Activated CD8-positive, alpha-beta memory T cell treated with anti-CD3 and anti-CD28 coated beads, Interleukin-2, amount 10 ng/mL, durations not matched to agents 7 days and 5 days (primary cell): ENCODE measurements at regions of chr17 and their contacts with region 1.

Region 1: DNA sequence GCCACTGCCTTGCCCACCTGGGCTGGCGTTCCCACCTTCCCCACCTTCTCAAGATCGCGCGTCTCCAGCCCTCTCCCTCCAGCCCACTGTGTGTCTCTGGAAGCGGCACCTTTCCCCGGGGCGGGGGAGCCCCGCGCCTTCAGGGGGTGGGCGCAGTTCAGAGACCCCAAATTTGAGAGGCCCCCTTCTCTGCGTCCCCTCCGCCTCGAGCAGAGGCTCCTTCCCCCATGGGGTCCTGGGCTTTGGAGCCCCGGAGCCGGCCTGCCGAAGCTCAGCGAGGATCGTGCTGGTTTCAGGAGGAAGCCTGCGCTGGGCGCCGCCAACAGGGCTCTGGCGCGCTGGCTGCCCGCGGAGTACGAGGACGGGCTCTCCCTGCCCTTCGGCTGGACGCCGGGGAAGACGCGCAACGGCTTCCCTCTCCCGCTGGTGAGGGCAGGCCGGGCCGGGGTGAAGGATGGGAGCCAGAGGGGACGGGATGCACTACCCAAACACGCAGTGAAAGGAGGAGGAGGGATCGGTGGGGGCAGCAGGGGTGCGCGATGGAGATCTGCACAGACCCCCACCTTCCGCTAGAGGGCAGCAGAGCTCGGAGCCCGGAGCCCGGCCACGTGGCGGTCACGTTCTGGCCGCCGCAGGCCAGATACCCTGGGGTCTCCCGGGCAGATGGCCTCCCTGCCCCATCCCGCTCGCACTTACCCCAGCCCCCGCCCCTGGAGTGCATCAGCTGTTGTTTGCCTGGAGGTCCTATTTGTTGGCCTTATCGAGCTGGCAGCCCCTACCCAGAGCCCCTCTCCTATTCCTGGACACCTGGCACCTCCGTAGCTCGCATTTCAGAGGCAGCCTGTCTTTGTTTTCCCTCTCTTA is 11.1 kb downstream of the LPO start:
- DNase-seq: peak; percentile 77
- ATAC-seq: peak; percentile 89
- H3K4me3 Mint-ChIP-seq: peak overlapping the region; percentile 66
- H3K27ac Mint-ChIP-seq: no peak overlapping the region
- H3K4me1 Mint-ChIP-seq: peaks cover 22% of the 10 kb centered on the region
- H3K27me3 Mint-ChIP-seq: peaks cover 58% of the 10 kb centered on the region

Region 2: GRCh38 chr17:58200017-58200633 is 49.4 kb before region 1 on chr17:
- CTCF ChIA-PET with region 1: interaction called, 10 read pairs
- DNase-seq: peak; percentile 62
- ATAC-seq: peak; percentile 83
- H3K4me3 Mint-ChIP-seq: no peak overlapping the region
- H3K27ac Mint-ChIP-seq: no peak overlapping the region
- H3K4me1 Mint-ChIP-seq: no peaks in the 10 kb centered on the region
- H3K27me3 Mint-ChIP-seq: peaks cover 25% of the 10 kb centered on the region

Region 3: DNA sequence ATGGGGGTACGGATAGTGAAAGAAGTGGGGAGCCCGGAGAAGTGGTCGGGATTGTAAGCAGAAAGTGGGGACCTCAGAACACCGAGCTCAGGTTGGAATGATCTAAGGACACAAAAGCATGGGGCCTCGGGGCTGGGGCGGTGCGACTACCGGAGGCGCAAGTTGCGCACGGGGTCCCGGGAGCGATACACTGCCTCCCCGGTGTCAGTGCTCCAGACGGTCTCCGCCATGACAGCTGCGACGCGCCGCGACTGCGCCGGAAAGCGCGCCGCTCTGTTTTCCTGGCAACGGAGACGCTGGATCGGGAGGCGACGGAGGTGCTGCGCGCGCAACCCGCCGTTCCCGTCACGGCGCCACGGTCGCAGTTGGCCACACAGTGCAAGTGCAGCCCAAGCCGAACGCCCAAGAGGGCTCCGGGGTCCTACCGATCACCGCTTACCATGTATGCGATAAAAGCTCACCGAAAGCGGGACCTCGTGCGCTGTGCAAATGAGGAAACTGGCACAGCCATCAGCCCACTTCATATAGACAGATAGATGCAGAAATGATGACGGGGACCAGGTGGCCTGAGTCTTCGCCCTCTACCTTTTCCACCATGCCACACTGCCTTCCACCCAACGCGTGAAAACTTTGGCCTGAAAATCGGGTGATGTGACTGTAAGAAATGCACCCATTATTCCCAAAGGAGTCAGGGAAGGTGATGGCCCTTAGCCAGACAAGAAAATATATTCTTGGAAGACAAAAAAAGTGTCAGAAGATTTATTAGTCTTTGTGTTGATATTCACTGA is 30.3 kb before region 1 on chr17 and contains the start of gene MKS1:
- CTCF ChIA-PET with region 1: interaction called, 17 read pairs
- DNase-seq: peak; percentile 97
- ATAC-seq: peak; percentile 99
- H3K4me3 Mint-ChIP-seq: peak within 1 kb of the TSS; percentile 89
- H3K27ac Mint-ChIP-seq: peak within 1 kb of the TSS; percentile 83
- H3K4me1 Mint-ChIP-seq: peaks cover 24% of the 10 kb centered on the region
- H3K27me3 Mint-ChIP-seq: peaks cover 5% of the 10 kb centered on the region
- total RNA-seq, gene MKS1: 17.8 to 18.2 TPM

Region 4: DNA sequence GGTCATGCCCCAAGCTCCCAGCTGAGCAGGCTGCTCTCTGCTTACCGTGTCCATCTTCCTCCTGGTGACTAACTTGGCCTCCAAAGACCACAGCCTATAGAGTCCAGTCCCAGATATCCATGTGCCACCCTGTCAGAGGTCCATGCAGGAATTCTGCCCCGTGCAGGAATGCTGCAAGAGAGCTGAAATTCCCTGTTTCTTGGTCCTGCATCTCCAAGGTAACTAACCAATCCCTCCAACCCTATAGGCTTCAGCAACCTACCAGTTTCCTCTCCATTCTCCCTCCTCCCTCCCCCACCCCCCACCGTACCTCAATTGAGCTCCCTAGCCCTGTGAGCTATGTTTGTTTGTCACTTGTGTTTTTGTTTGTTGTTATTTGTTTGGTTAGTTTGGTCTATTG is 20.8 kb before region 1 on chr17:
- CTCF ChIA-PET with region 1: interaction called, 22 read pairs
- DNase-seq: no peak
- ATAC-seq: no peak
- H3K4me3 Mint-ChIP-seq: no peak overlapping the region
- H3K27ac Mint-ChIP-seq: no peak overlapping the region
- H3K4me1 Mint-ChIP-seq: peaks cover 15% of the 10 kb centered on the region
- H3K27me3 Mint-ChIP-seq: peaks cover 47% of the 10 kb centered on the region

Region 5: DNA sequence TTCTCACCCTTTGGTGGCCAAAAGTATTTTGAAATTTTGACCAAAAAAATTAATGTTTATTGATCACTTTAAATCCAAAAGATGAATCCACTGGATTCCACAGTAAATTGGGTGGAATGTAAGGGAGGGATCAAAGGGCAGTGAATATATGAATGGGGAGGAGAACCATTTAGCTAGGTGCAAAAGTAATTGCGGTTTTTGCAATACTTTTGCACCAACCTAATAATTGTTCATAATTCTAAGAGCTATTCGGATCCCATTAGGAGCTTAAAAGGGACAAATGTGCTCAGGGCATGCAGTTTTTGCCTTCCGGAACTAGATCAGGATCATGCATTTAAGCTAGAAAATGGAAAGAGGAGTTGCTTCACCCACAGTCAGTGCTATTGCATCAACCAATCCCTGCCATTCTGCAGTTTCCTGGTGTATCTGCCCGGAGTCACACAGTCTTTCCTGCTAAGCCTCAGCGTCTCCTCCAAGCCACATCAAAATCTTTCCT is 11.3 kb before region 1 on chr17 and contains the start of gene LPO:
- CTCF ChIA-PET with region 1: interaction called, 17 read pairs
- DNase-seq: no peak
- ATAC-seq: no peak
- H3K4me3 Mint-ChIP-seq: no peak within 1 kb of the TSS
- H3K27ac Mint-ChIP-seq: no peak within 1 kb of the TSS
- H3K4me1 Mint-ChIP-seq: peaks cover 3% of the 10 kb centered on the region
- H3K27me3 Mint-ChIP-seq: peaks cover 84% of the 10 kb centered on the region
- total RNA-seq, gene LPO: not detected

Region 6: DNA sequence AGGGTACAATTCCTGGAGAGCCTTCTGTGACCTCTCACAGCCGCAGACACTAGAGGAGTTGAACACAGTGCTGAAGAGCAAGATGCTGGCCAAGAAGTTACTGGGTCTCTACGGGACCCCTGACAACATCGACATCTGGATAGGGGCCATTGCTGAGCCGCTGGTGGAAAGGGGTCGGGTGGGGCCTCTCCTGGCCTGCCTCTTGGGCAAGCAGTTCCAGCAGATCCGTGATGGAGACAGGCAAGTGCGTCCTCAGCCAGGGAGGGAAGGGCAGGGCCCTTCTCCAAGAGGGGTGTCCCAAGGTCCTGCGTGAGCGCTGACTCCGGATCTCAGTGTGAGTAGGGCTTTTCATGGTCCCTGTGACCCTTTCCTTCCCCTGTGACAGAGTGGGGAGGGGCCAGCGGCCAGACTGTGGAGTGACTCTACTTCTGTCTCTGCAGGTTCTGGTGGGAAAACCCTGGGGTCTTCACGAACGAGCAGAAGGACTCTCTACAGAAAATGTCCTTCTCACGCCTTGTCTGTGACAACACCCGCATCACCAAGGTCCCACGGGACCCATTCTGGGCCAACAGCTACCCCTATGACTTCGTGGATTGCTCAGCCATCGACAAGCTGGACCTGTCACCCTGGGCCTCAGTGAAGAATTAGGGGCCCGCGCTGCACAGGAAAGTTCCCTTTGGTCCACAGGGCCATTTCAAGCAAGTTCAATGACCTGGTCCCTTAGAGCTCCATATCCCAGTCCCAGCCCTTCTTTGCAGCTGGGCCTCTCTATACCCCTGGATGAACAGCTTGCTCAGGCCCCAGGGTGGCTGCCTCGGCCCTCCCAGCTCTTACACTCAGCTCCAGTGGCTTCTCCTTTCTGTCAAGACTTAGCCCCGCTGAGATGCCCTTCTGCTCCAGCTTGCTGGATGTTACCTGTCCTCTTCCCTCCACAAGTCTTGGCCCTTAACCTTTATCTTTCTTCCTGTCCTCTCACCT is 18.1 kb after region 1 on chr17:
- CTCF ChIA-PET with region 1: interaction called, 14 read pairs
- DNase-seq: peak; percentile 31
- ATAC-seq: no peak
- H3K4me3 Mint-ChIP-seq: no peak overlapping the region
- H3K27ac Mint-ChIP-seq: no peak overlapping the region
- H3K4me1 Mint-ChIP-seq: no peaks in the 10 kb centered on the region
- H3K27me3 Mint-ChIP-seq: peaks cover 37% of the 10 kb centered on the region

Region 7: GRCh38 chr17:58344047-58344790 is 94.7 kb after region 1 on chr17:
- CTCF ChIA-PET with region 1: interaction called, 11 read pairs
- DNase-seq: peak; percentile 97
- ATAC-seq: peak; percentile 75
- H3K4me3 Mint-ChIP-seq: peak overlapping the region; percentile 83
- H3K27ac Mint-ChIP-seq: peak overlapping the region; percentile 98
- H3K4me1 Mint-ChIP-seq: peaks cover 87% of the 10 kb centered on the region
- H3K27me3 Mint-ChIP-seq: no peaks in the 10 kb centered on the region

Region 8: DNA sequence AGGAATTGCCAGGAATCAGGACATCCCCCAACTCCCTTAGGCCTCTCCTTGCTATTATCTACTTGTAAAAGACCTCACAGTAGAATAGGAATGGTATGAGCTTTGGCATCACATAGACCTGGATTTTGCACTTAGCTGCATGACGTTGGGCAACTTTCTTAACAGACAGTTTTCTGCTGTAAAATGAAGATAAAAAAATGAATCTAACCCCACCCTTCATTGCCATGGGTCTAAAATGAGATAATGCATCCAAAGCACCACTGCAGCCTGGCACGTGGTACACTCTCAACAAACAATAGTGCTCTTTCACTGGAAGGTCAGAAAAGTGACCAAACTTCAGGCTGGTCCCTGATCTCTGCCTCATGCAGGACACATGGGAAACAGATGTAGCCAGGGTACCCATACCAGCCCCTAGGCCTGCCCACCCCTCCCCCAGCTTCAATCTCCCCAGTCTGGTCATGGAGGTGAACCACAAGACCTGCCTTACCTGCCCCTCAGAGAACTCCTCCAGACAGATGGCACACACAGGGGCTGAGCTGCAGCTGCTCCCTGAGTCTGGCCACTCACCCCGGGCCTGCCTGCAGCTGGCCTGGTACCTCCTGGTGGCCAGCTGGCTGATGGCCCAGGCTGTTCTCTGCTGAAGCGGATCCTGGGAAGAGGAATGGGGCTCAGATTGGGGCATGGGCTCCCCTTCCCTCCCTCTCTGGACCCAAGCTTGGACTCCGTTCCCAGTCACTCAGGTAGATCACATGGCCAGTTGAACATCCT is 111.0 kb after region 1 on chr17:
- CTCF ChIA-PET with region 1: no interaction called
- DNase-seq: no peak
- ATAC-seq: no peak
- H3K4me3 Mint-ChIP-seq: no peak overlapping the region
- H3K27ac Mint-ChIP-seq: no peak overlapping the region
- H3K4me1 Mint-ChIP-seq: no peaks in the 10 kb centered on the region
- H3K27me3 Mint-ChIP-seq: no peaks in the 10 kb centered on the region

Region 9: GRCh38 chr17:58870753-58871152 is 621.3 kb after region 1 on chr17:
- CTCF ChIA-PET with region 1: no interaction called
- DNase-seq: no peak
- ATAC-seq: no peak
- H3K4me3 Mint-ChIP-seq: no peak overlapping the region
- H3K27ac Mint-ChIP-seq: no peak overlapping the region
- H3K4me1 Mint-ChIP-seq: no peaks in the 10 kb centered on the region
- H3K27me3 Mint-ChIP-seq: peaks cover 33% of the 10 kb centered on the region